IMR-90 (cell line): ENCODE measurements at regions of chr3 and their contacts with region 1.

Region 1: DNA sequence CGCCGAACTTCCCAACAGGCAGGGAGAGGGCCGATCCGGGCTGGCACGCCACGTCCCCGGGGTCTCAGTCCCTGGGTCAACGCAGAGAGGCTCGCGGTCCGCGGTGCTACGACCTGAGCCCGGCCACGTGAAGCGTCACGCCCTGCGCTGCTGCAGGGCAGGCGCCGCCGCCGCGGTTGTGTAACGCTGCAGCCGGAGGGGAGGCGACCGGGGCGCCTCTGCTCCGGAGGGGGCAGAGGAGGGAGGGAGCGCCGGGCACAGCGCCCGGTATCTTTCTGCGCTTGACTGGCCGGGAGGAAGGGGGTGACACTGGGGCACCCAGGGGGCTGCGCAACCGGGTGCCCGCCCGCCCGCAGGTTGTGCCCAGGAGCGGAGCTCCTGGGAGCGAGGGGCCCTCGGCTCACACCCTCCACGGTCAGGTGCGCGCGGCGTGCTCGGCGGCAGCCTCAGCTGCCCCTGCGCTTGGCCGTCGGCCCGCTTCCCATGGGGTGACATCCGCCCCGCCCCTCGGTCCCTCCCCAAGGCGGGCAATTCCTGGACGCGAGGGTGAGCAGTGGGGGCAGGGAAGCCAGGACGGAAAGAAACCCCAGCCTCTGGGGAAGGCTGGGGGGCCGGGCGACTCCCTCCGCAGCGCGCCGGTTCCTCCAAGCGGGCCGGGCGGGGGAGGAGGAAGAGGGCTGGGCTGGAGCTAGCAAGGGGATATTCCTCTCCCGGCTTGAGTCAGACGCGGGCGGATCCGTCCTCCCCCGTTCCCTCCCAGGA is 852 bp upstream of the BHLHE40 start:
- DNase-seq: peak; percentile 97
- ATAC-seq: peak; percentile 79
- H3K4me3 ChIP-seq: peak overlapping the region; percentile 55
- H3K27ac ChIP-seq: peak overlapping the region; percentile 84
- H3K4me1 ChIP-seq: peaks cover 11% of the 10 kb centered on the region
- H3K27me3 ChIP-seq: no peaks in the 10 kb centered on the region
- CTCF ChIP-seq: 0 out of 2 replicates have a peak, but pooled peaks have one; percentile 1
- POLR2A ChIP-seq: peak; percentile 22
- RAD21 ChIP-seq: peak; percentile 23; the same call in 1 of the 2 replicates

Region 2: DNA sequence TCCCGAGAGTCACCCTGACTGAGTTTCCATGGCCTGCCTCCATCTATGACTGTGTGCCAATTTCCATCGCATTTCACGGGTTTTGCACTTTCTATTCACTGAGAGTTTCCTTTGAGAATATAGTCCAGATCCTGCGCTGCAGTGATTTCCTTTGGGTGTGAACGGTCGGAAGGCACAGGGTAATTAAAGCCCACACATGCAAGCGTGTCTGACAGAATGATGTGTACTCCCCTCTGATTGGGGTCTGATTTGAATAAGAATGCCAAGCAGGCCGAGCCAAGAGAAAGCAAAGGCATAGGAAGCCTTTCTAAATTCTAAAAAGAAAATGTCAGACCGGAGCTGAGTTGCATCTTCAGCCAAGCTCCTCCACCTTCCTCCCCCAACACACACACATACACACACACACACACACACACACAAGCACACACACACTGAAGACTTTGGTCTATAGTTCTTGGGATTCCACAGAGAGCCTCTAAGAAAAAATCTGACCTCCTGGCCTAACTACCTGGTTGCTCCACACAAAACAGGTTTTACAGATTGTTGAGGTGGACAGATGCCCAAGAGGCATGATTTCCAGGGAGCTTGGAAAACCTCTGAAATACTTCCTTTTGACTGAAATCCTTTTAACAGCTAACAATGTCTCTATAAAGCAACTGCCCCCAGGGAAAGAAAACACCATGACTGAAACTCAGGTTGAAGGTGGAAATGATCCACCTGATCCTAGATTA is 1238.9 kb before region 1 on chr3:
- CTCF ChIA-PET with region 1: no interaction called
- POLR2A ChIA-PET with region 1: no interaction called
- dilution Hi-C with region 1: no loop called
- in situ Hi-C with region 1: no loop called
- intact Hi-C with region 1: no loop called
- DNase-seq: no peak
- ATAC-seq: no peak
- H3K4me3 ChIP-seq: no peak overlapping the region
- H3K27ac ChIP-seq: no peak overlapping the region
- H3K4me1 ChIP-seq: no peaks in the 10 kb centered on the region
- H3K27me3 ChIP-seq: no peaks in the 10 kb centered on the region
- CTCF ChIP-seq: no peak
- POLR2A ChIP-seq: no peak
- RAD21 ChIP-seq: no peak

Region 3: DNA sequence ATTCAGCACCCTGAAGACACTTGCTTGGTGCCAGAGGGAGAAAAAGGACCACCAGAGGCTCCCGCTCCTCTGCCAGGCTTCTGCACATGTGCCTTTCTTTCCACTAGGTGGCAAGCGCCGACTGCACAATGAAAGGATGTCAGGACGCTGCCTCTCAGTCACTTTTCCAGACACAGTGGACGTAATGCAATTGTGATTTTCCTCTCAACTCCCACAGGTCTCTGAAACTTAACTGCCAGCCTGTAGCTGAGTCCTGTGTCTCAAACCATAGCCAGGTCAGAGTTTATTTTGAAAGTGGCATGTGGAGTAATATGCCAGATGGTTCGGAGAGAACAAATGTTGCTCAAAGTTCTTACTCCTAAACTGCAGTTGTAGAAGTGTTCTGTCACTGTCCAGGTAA is 322.3 kb before region 1 on chr3:
- CTCF ChIA-PET with region 1: interaction called, 3 read pairs
- POLR2A ChIA-PET with region 1: no interaction called
- dilution Hi-C with region 1: no loop called
- in situ Hi-C with region 1: no loop called
- intact Hi-C with region 1: loop called (anchors 1 kb)
- DNase-seq: peak; percentile 75
- ATAC-seq: peak; percentile 98
- H3K4me3 ChIP-seq: no peak overlapping the region
- H3K27ac ChIP-seq: no peak overlapping the region
- H3K4me1 ChIP-seq: no peaks in the 10 kb centered on the region; the same call in 1 of the 2 replicates
- H3K27me3 ChIP-seq: no peaks in the 10 kb centered on the region
- CTCF ChIP-seq: peak; percentile 97
- POLR2A ChIP-seq: 0 out of 2 replicates have a peak, but pooled peaks have one; percentile 35
- RAD21 ChIP-seq: peak; percentile 99

Region 4: DNA sequence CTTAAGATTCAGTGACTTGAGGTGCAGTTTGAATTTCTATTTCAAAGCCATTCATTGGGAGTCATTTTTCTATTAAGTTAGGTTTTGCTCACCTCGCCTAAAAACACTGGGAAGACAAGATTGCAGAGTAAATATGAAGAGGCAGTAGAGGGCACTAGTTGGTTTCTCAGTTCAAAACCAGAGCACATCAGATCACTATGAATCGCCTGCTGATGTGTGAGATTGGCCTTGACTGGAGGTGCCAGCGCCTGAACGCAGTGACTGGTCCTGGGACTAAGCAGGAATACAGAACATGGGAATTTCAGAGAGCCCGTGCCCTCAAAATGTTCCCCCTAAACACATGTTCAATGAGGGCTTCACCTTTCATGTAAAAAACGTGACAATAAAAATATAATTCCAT is 256.3 kb before region 1 on chr3:
- CTCF ChIA-PET with region 1: interaction called, 11 read pairs
- POLR2A ChIA-PET with region 1: interaction called, 3 read pairs
- dilution Hi-C with region 1: no loop called
- in situ Hi-C with region 1: loop called (anchors 5 kb)
- intact Hi-C with region 1: loop called (anchors 1 kb)
- DNase-seq: peak; percentile 73
- ATAC-seq: peak; percentile 47
- H3K4me3 ChIP-seq: no peak overlapping the region
- H3K27ac ChIP-seq: peak overlapping the region; percentile 93
- H3K4me1 ChIP-seq: peaks cover 17% of the 10 kb centered on the region
- H3K27me3 ChIP-seq: no peaks in the 10 kb centered on the region
- CTCF ChIP-seq: peak; percentile 53
- POLR2A ChIP-seq: no peak
- RAD21 ChIP-seq: peak; percentile 58

Region 5: DNA sequence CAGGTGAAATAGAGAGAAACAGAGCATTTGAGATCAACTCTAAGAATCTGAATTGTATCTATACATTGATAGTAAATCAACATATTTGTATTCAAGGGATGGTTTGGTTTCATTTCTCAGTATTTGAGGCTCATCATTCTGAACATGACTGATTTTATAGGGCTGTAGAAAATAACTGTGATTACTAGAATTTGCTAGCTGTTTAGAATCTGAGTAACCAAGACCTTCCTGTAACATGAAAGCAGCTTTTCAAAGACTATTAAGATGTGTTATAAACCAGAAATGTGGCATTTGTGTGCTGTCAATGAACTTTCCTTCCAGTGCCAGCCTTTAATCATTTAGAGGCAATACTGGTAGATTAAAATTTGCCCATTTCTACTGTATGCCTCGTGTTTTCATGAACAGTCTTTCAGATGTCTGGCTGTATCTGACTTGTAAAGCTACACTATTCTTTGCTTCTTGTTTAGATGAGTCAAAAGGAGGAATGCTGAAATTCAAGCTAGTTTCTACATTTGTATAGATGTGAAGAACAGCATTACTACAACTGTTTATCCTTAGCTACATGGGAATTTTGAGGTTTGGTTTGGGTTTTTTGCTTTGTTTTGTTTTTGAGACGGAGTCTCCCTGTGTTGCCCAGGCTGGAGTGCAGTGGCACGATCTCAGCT is 136.5 kb before region 1 on chr3:
- CTCF ChIA-PET with region 1: no interaction called
- POLR2A ChIA-PET with region 1: no interaction called
- dilution Hi-C with region 1: no loop called
- in situ Hi-C with region 1: loop called (anchors 10 kb)
- intact Hi-C with region 1: loop called (anchors 5 kb)
- DNase-seq: peak; percentile 89
- ATAC-seq: peak; percentile 99
- H3K4me3 ChIP-seq: no peak overlapping the region
- H3K27ac ChIP-seq: peak overlapping the region; percentile 78; the same call in 1 of the 2 replicates
- H3K4me1 ChIP-seq: peaks cover 6% of the 10 kb centered on the region
- H3K27me3 ChIP-seq: no peaks in the 10 kb centered on the region
- CTCF ChIP-seq: no peak
- POLR2A ChIP-seq: no peak
- RAD21 ChIP-seq: no peak

Region 6: GRCh38 chr3:5016218-5017161 is 38.1 kb after region 1 on chr3:
- CTCF ChIA-PET with region 1: interaction called, 7 read pairs
- POLR2A ChIA-PET with region 1: interaction called, 17 read pairs
- dilution Hi-C with region 1: no loop called
- in situ Hi-C with region 1: loop called (anchors 5 kb)
- intact Hi-C with region 1: no loop called
- DNase-seq: peak; percentile 80
- ATAC-seq: peak; percentile 39; the same call in 1 of the 2 replicates
- H3K4me3 ChIP-seq: no peak overlapping the region
- H3K27ac ChIP-seq: no peak overlapping the region
- H3K4me1 ChIP-seq: peaks cover 20% of the 10 kb centered on the region
- H3K27me3 ChIP-seq: no peaks in the 10 kb centered on the region
- CTCF ChIP-seq: no peak
- POLR2A ChIP-seq: no peak
- RAD21 ChIP-seq: no peak

Region 7: GRCh38 chr3:5057857-5058324 is 79.5 kb after region 1 on chr3:
- CTCF ChIA-PET with region 1: interaction called, 3 read pairs
- POLR2A ChIA-PET with region 1: interaction called, 4 read pairs
- dilution Hi-C with region 1: no loop called
- in situ Hi-C with region 1: no loop called
- intact Hi-C with region 1: loop called (anchors 2 kb)
- DNase-seq: peak; percentile 85
- ATAC-seq: peak; percentile 83
- H3K4me3 ChIP-seq: no peak overlapping the region
- H3K27ac ChIP-seq: no peak overlapping the region
- H3K4me1 ChIP-seq: peaks cover 6% of the 10 kb centered on the region
- H3K27me3 ChIP-seq: peaks cover 3% of the 10 kb centered on the region; the same call in 1 of the 2 replicates
- CTCF ChIP-seq: peak; percentile 80
- POLR2A ChIP-seq: no peak
- RAD21 ChIP-seq: peak; percentile 90

Region 8: GRCh38 chr3:5194341-5195159 is 216.2 kb after region 1 on chr3:
- CTCF ChIA-PET with region 1: no interaction called
- POLR2A ChIA-PET with region 1: no interaction called
- dilution Hi-C with region 1: no loop called
- in situ Hi-C with region 1: no loop called
- intact Hi-C with region 1: loop called (anchors 5 kb)
- DNase-seq: peak; percentile 91
- ATAC-seq: peak; percentile 63
- H3K4me3 ChIP-seq: no peak overlapping the region
- H3K27ac ChIP-seq: no peak overlapping the region; the same call in 1 of the 2 replicates
- H3K4me1 ChIP-seq: peaks cover 26% of the 10 kb centered on the region
- H3K27me3 ChIP-seq: no peaks in the 10 kb centered on the region
- CTCF ChIP-seq: no peak
- POLR2A ChIP-seq: no peak
- RAD21 ChIP-seq: no peak